ENCODE measurements at regions of chr6 and their contacts with region 1.

Region 1: DNA sequence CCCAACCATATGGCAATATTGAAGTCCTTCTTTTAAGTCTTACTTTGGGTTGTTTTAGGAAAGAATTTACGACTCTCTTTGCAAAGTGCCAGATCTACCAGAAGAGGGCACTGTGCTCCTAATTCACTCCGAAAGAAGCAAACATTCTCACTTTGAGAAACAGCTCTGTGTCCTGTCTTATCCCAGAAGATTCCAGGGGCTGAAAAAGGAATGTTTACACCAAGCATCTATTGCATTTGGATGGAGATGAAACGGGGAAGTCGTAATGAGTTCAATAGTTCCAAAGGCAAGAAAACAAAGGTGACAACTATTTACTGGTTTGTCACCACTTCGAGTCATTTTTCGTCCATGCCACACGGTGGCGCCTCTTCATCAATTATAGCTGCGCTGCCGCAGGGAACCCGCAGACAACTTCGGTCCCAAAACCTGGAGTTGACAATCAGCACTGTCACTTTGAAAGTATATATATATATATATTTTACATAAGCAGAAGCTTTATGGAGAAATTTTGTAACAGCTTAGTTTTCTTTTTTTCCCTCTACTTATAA is 121.6 kb downstream of the MOXD1 start:
- DNase-seq: peak; percentile 83
- H3K4me3 ChIP-seq: peak overlapping the region; percentile 44
- H3K27ac ChIP-seq: no peak overlapping the region
- H3K4me1 ChIP-seq: no peaks in the 10 kb centered on the region
- H3K27me3 ChIP-seq: peaks cover 28% of the 10 kb centered on the region
- CTCF ChIP-seq: peak; percentile 99

Region 2: DNA sequence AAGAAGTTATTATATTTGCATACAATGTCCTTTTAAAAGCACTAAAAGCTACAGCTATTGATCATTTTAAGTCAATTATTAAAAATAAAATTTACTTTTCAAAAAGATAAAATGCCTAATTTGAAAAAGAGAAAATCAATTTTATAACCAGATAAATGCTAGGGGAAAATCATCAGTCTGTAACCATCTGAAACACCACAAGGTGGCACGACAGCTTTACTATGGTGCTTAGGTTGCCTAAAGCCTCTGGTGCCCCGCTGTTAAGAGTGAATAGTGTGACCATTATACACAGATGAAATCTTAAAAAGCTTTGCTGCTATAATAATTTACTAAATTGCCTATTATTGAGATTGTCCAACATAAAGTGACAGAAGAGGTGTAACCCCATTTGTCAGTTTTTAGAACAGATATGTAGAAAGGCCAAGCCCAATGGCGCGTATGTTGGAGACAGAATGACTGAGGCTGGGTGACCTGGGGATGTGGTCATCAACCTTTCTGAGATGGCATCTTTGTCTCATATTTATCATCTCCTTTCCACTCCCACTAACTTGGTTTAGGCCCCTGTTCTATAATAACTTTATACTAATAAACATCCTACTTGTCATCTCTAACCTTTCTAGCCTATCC is 20.8 kb after region 1 on chr6:
- CTCF ChIA-PET with region 1: interaction called, 22 read pairs
- POLR2A ChIA-PET with region 1: no interaction called
- intact Hi-C with region 1: no loop called
- DNase-seq: peak; percentile 62
- H3K4me3 ChIP-seq: no peak overlapping the region
- H3K27ac ChIP-seq: no peak overlapping the region
- H3K4me1 ChIP-seq: no peaks in the 10 kb centered on the region
- H3K27me3 ChIP-seq: peaks cover 23% of the 10 kb centered on the region
- CTCF ChIP-seq: peak; percentile 71

Region 3: DNA sequence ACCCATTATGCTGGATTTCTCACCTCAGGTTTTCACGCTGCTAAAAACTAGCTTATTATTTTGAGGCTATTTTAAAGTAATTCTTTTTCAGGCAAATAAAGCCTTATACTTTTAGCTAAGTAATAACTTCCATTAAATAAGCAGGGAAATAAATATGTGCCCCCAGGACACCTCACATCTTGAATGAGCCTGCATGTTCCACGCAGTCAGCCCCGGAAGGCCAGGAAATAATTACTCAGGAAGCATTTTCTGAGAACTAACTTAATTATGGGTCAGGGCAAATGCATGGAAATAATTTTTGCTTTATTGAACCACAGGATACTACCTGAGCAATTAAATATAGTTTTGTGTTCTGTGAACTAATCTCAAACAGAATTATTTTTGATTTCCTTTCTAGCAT is 192.1 kb after region 1 on chr6:
- CTCF ChIA-PET with region 1: interaction called, 10 read pairs
- POLR2A ChIA-PET with region 1: interaction called, 3 read pairs
- intact Hi-C with region 1: no loop called
- DNase-seq: peak; percentile 82
- H3K4me3 ChIP-seq: no peak overlapping the region
- H3K27ac ChIP-seq: no peak overlapping the region
- H3K4me1 ChIP-seq: peaks cover 21% of the 10 kb centered on the region
- H3K27me3 ChIP-seq: no peaks in the 10 kb centered on the region
- CTCF ChIP-seq: no peak

Region 4: GRCh38 chr6:132483779-132484679 is 204.4 kb after region 1 on chr6:
- CTCF ChIA-PET with region 1: interaction called, 28 read pairs
- POLR2A ChIA-PET with region 1: no interaction called
- intact Hi-C with region 1: loop called (anchors 2 kb)
- DNase-seq: peak; percentile 76
- H3K4me3 ChIP-seq: no peak overlapping the region
- H3K27ac ChIP-seq: no peak overlapping the region
- H3K4me1 ChIP-seq: peaks cover 2% of the 10 kb centered on the region
- H3K27me3 ChIP-seq: no peaks in the 10 kb centered on the region
- CTCF ChIP-seq: peak; percentile 70

Measured in A673 (cell line).